ENCODE measurements at regions of chr3 and their contacts with region 1.

Region 1: DNA sequence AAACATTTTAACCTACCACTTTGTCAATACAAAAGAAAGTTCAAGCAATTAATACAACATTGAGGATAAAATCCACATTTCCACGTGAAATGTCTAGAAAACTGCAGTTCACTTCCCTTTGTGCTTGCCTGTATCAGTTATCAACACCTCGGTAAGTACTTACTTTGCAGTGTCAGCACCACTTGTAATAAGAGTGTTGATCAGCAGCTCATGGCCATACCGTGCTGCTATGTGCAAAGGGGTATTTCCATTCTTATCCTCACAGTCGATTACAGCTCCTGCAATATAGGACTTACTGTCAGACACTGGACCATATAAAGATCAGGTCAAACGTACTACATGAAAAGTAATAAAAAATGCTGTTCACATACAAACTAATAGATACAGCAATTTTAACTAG is 84.4 kb downstream of the ANKRD28 start:
- DNase-seq: no peak
- ATAC-seq: peak; percentile 81
- H3K4me3 ChIP-seq: no peak overlapping the region
- H3K27ac ChIP-seq: no peak overlapping the region
- H3K4me1 ChIP-seq: no peaks in the 10 kb centered on the region; the same call in 1 of the 2 replicates
- H3K27me3 ChIP-seq: no peaks in the 10 kb centered on the region
- CTCF ChIP-seq: no peak
- EP300 ChIP-seq: no peak
- POLR2A ChIP-seq: no peak
- RAD21 ChIP-seq: no peak

Region 2: GRCh38 chr3:15682561-15683185 is 30.7 kb before region 1 on chr3:
- CTCF ChIA-PET with region 1: interaction called, 3 read pairs
- POLR2A ChIA-PET with region 1: interaction called, 3 read pairs
- RAD21 ChIA-PET with region 1: interaction called, 9 read pairs
- SMC1A ChIA-PET with region 1: interaction called, 10 read pairs
- in situ Hi-C with region 1: no loop called
- intact Hi-C with region 1: no loop called
- DNase-seq: no peak
- ATAC-seq: no peak
- H3K4me3 ChIP-seq: no peak overlapping the region
- H3K27ac ChIP-seq: no peak overlapping the region; the same call in 1 of the 2 replicates
- H3K4me1 ChIP-seq: no peaks in the 10 kb centered on the region
- H3K27me3 ChIP-seq: no peaks in the 10 kb centered on the region
- CTCF ChIP-seq: no peak
- EP300 ChIP-seq: no peak
- POLR2A ChIP-seq: no peak
- RAD21 ChIP-seq: no peak

Region 3: GRCh38 chr3:15726043-15726442 is 12.7 kb after region 1 on chr3:
- CTCF ChIA-PET with region 1: interaction called, 14 read pairs
- POLR2A ChIA-PET with region 1: no interaction called
- RAD21 ChIA-PET with region 1: interaction called, 21 read pairs
- SMC1A ChIA-PET with region 1: interaction called, 21 read pairs
- in situ Hi-C with region 1: no loop called
- intact Hi-C with region 1: no loop called
- DNase-seq: peak; percentile 60
- ATAC-seq: peak; percentile 93
- H3K4me3 ChIP-seq: no peak overlapping the region
- H3K27ac ChIP-seq: peak overlapping the region; percentile 71
- H3K4me1 ChIP-seq: peaks cover 18% of the 10 kb centered on the region
- H3K27me3 ChIP-seq: no peaks in the 10 kb centered on the region
- CTCF ChIP-seq: no peak
- EP300 ChIP-seq: no peak
- POLR2A ChIP-seq: no peak
- RAD21 ChIP-seq: no peak